ENCODE measurements at regions of chr10 and their contacts with region 1.

Region 1: GRCh38 chr10:113958631-113959382 is 84.9 kb upstream of the ADRB1 start:
- DNase-seq: no peak
- H3K4me3 ChIP-seq: no peak overlapping the region
- H3K27ac ChIP-seq: peak overlapping the region; percentile 77 to 81 (median 80)
- H3K4me1 ChIP-seq: peaks cover 12 to 57% (median 54%) of the 10 kb centered on the region in 4 donors
- H3K27me3 ChIP-seq: no peaks in the 10 kb centered on the region
- CTCF ChIP-seq: no peak
- EP300 ChIP-seq: no peak
- POLR2A ChIP-seq: no peak

Region 2: GRCh38 chr10:114043532-114044246 is 84.9 kb after region 1 on chr10 and contains the start of gene ADRB1:
- intact Hi-C with region 1: loop called (anchors 5 kb)
- DNase-seq: peak; percentile 95
- H3K4me3 ChIP-seq: peak within 1 kb of the TSS; percentile 63 to 72 (median 68)
- H3K27ac ChIP-seq: peak within 1 kb of the TSS; percentile 93 to 95 (median 94)
- H3K4me1 ChIP-seq: peaks cover 0 to 48% (median 36%) of the 10 kb centered on the region in 4 donors
- H3K27me3 ChIP-seq: peaks cover 0 to 20% (median 1%) of the 10 kb centered on the region in 4 donors
- CTCF ChIP-seq: no peak
- EP300 ChIP-seq: no peak
- POLR2A ChIP-seq: peak; percentile 26
- total RNA-seq, gene ADRB1: 4.2 to 25.3 (median 12.3) TPM

Measured in esophagus muscularis mucosa (tissue), 4 donors.